ENCODE measurements at regions of chr11 and their contacts with region 1.

Region 1: DNA sequence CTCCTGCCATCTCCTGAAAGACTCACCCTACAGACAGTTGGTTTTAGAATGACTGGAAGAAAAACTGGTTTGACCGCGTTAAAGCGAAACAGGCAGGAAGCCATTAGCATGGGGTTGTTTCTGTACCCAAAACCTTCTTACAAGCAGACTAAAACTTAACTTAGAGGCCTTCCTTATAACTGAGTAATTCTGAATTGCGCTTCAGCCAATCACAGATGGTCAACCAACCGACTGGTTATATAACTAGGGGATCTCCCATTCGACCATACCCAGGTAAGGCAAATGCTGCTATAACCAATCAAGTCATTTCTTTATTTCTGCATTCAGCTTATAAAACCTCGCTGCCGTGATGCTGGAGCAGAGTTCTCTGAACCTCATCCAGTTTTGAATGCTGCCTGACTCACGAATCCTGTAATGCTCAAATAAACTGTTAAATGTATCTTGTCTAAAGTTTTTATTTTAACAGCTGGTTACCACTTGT is 87.8 kb upstream of the DRD2 start:
- DNase-seq: no peak
- ATAC-seq: no peak
- H3K4me3 ChIP-seq: no peak overlapping the region
- H3K27ac ChIP-seq: no peak overlapping the region
- H3K4me1 ChIP-seq: no peaks in the 10 kb centered on the region
- H3K27me3 ChIP-seq: no peaks in the 10 kb centered on the region

Region 2: GRCh38 chr11:113474362-113475159 is 88.5 kb before region 1 on chr11:
- intact Hi-C with region 1: no loop called
- DNase-seq: peak; percentile 81 to 93
- ATAC-seq: peak; percentile 61
- H3K4me3 ChIP-seq: no peak overlapping the region
- H3K27ac ChIP-seq: no peak overlapping the region
- H3K4me1 ChIP-seq: no peaks in the 10 kb centered on the region
- H3K27me3 ChIP-seq: peaks cover 0 to 3% of the 10 kb centered on the region in 2 donors

Region 3: DNA sequence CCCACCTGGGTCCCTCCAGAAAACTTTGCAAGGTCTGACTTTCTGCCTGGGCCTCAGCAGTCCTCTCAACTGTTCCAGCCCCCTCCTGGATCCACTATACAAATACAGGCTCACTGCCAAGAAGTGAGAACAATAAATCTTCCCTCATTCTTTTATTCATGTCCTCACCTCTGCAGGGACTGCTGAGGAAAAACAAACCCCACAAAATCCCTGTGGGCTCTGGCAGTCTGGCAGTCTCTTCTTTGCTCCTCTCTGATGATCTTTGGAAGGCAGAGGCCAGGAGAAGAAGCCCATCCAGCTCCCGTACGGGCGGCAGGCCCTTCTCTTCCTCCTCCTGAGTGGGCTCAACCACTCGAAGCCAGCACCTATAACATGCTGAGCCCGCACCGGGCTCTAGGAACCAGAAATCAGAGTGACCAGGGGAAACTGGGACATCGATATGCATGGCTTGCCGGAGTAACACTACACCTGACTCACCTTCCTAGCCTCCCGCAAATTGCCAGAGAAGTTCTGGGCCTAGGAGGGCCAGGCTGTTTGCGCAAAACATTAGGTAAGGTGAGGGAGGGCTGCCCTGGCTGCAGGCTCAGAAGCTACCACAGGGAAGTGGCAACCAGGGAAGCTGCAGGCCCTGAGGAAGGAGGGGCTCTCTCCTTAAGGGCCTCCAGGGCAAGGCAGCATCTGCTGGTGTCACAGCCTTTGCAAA is 118.8 kb after region 1 on chr11:
- intact Hi-C with region 1: loop called in 1 of 2 experiments (anchors 10 kb)
- DNase-seq: no peak
- ATAC-seq: no peak
- H3K4me3 ChIP-seq: no peak overlapping the region
- H3K27ac ChIP-seq: no peak overlapping the region
- H3K4me1 ChIP-seq: peaks cover 0 to 1% of the 10 kb centered on the region in 2 donors
- H3K27me3 ChIP-seq: no peaks in the 10 kb centered on the region